Panc1 (cell line): ENCODE measurements at regions of chr3 and their contacts with region 1.

Region 1: GRCh38 chr3:151838583-151839312 is 24.8 kb downstream of the AADAC start:
- DNase-seq: peak; percentile 33
- ATAC-seq: peak; percentile 97
- H3K4me3 ChIP-seq: peak overlapping the region; percentile 13 to 26; a peak in 2 of 4 replicates
- H3K27ac ChIP-seq: no peak overlapping the region
- H3K4me1 ChIP-seq: peaks cover 7% of the 10 kb centered on the region
- H3K27me3 ChIP-seq: no peaks in the 10 kb centered on the region
- CTCF ChIP-seq: peak; percentile 83; the same call in 1 of the 2 replicates

Region 2: GRCh38 chr3:151227807-151228665 is 610.7 kb before region 1 on chr3:
- CTCF ChIA-PET with region 1: no interaction called
- POLR2A ChIA-PET with region 1: no interaction called
- in situ Hi-C with region 1: no loop called
- intact Hi-C with region 1: loop called (anchors 1 kb)
- DNase-seq: peak; percentile 63
- ATAC-seq: peak; percentile 90
- H3K4me3 ChIP-seq: no peak overlapping the region
- H3K27ac ChIP-seq: no peak overlapping the region
- H3K4me1 ChIP-seq: no peaks in the 10 kb centered on the region
- H3K27me3 ChIP-seq: no peaks in the 10 kb centered on the region
- CTCF ChIP-seq: peak; percentile 94

Region 3: GRCh38 chr3:151290673-151291072 is 548.1 kb before region 1 on chr3:
- CTCF ChIA-PET with region 1: interaction called, 3 read pairs
- POLR2A ChIA-PET with region 1: no interaction called
- in situ Hi-C with region 1: no loop called
- intact Hi-C with region 1: loop called (anchors 5 kb)
- DNase-seq: no peak
- ATAC-seq: no peak
- H3K4me3 ChIP-seq: no peak overlapping the region
- H3K27ac ChIP-seq: no peak overlapping the region
- H3K4me1 ChIP-seq: no peaks in the 10 kb centered on the region
- H3K27me3 ChIP-seq: no peaks in the 10 kb centered on the region
- CTCF ChIP-seq: peak; percentile 58; the same call in 1 of the 2 replicates

Region 4: GRCh38 chr3:151439652-151440129 is 399.1 kb before region 1 on chr3:
- CTCF ChIA-PET with region 1: interaction called, 24 read pairs
- POLR2A ChIA-PET with region 1: no interaction called
- in situ Hi-C with region 1: no loop called
- intact Hi-C with region 1: loop called (anchors 1 kb)
- DNase-seq: peak; percentile 69
- ATAC-seq: peak; percentile 94
- H3K4me3 ChIP-seq: no peak overlapping the region
- H3K27ac ChIP-seq: no peak overlapping the region
- H3K4me1 ChIP-seq: 0 out of 2 replicates have a peak, but pooled peaks cover 2% of the 10 kb centered on the region
- H3K27me3 ChIP-seq: no peaks in the 10 kb centered on the region
- CTCF ChIP-seq: peak; percentile 84

Region 5: DNA sequence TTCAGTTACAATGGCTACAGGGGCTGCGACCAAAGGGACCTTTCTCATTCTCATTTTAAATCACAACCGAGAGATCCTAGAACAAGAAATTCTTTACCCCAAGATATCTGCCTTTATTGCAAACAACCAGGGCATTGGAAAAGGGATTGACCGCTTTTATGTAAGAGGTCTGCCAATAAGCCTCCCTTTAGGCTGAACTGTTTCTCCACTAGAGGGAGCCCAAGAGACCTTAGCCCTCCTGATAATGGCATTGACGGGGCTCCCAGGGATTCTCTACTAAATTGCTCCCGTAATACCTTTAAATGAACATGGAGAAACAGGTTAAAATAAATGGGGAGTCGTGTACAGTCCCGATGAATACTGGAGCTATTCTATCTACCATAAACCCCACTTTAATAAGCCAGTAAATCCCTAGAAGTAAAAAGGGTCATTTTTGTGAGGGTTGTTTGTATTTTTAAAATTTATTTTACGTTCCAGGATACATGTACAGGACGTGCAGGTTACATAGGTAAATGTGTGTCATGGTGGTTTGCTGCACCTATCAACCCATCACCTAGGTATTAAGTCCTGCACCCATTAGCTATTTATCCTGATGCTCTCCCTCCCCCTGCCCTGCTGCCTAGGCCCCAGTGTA is 370.3 kb before region 1 on chr3:
- CTCF ChIA-PET with region 1: interaction called, 11 read pairs
- POLR2A ChIA-PET with region 1: no interaction called
- in situ Hi-C with region 1: no loop called
- intact Hi-C with region 1: loop called (anchors 1 kb)
- DNase-seq: peak; percentile 42
- ATAC-seq: peak; percentile 95
- H3K4me3 ChIP-seq: no peak overlapping the region
- H3K27ac ChIP-seq: no peak overlapping the region
- H3K4me1 ChIP-seq: no peaks in the 10 kb centered on the region
- H3K27me3 ChIP-seq: 0 out of 2 replicates have a peak, but pooled peaks cover 3% of the 10 kb centered on the region
- CTCF ChIP-seq: peak; percentile 96

Region 6: DNA sequence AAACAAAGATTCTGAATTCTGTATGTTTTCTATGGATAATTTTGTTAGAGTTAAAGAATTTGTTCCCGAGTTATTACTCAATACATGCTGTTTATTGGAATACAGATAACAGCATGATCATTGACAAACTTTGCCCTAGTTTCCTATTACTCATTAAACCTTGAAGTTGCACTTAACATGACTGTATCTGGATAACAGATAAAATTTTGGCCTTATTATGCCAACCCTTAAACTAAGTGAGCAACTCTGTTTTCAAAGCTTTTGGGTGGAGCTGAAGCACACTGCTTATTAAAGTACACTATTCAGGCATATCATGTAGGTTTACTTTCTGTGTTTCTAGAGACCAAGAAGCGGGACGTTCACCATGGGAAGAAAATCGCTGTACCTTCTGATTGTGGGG is 24.9 kb before region 1 on chr3 and contains the start of gene AADAC:
- CTCF ChIA-PET with region 1: no interaction called
- POLR2A ChIA-PET with region 1: no interaction called
- in situ Hi-C with region 1: no loop called
- intact Hi-C with region 1: no loop called
- DNase-seq: no peak
- ATAC-seq: no peak
- H3K4me3 ChIP-seq: no peak within 1 kb of the TSS
- H3K27ac ChIP-seq: no peak within 1 kb of the TSS
- H3K4me1 ChIP-seq: no peaks in the 10 kb centered on the region
- H3K27me3 ChIP-seq: no peaks in the 10 kb centered on the region
- CTCF ChIP-seq: no peak
- total RNA-seq, gene AADAC: 0.26 TPM

Region 7: GRCh38 chr3:151918253-151919029 is 79.7 kb after region 1 on chr3:
- CTCF ChIA-PET with region 1: no interaction called
- POLR2A ChIA-PET with region 1: no interaction called
- in situ Hi-C with region 1: no loop called
- intact Hi-C with region 1: loop called (anchors 5 kb)
- DNase-seq: peak; percentile 56
- ATAC-seq: peak; percentile 81; the same call in 1 of the 2 replicates
- H3K4me3 ChIP-seq: no peak overlapping the region
- H3K27ac ChIP-seq: no peak overlapping the region
- H3K4me1 ChIP-seq: no peaks in the 10 kb centered on the region
- H3K27me3 ChIP-seq: no peaks in the 10 kb centered on the region
- CTCF ChIP-seq: peak; percentile 75; the same call in 1 of the 2 replicates

Region 8: GRCh38 chr3:152444029-152444641 is 605.4 kb after region 1 on chr3:
- CTCF ChIA-PET with region 1: no interaction called
- POLR2A ChIA-PET with region 1: no interaction called
- in situ Hi-C with region 1: no loop called
- intact Hi-C with region 1: loop called (anchors 10 kb)
- DNase-seq: peak; percentile 65
- ATAC-seq: no peak
- H3K4me3 ChIP-seq: no peak overlapping the region
- H3K27ac ChIP-seq: no peak overlapping the region
- H3K4me1 ChIP-seq: peaks cover 8% of the 10 kb centered on the region
- H3K27me3 ChIP-seq: no peaks in the 10 kb centered on the region
- CTCF ChIP-seq: peak; percentile 72; the same call in 1 of the 2 replicates